Activated CD8-positive, alpha-beta memory T cell treated with anti-CD3 and anti-CD28 coated beads, Interleukin-2, amount 10 ng/mL, durations not matched to agents 7 days and 5 days (primary cell): ENCODE measurements at regions of chr12 and their contacts with region 1.

Region 1: DNA sequence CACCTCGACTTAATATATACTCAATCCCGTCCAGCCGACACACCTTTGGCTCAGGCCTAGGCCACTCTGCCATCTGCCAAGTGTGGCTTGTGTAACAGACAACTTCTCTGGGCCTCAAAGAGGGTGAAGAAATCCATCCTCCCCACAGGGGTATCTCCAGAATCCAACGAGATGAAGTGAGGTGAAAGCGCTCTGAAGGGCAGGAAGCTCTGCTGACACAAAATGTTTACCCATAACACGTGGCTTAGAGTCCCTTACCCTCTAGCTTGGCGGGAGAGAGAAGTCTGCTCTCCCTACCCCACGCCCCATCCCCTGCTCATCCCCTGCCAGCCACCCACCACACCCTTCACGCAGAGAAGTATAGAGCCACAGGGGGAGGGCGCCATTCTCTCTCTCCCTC is 13.0 kb downstream of the ZBTB39 start:
- DNase-seq: peak; percentile 38
- ATAC-seq: no peak
- H3K4me3 Mint-ChIP-seq: no peak overlapping the region
- H3K27ac Mint-ChIP-seq: no peak overlapping the region
- H3K4me1 Mint-ChIP-seq: peaks cover 20% of the 10 kb centered on the region
- H3K27me3 Mint-ChIP-seq: peaks cover 6% of the 10 kb centered on the region

Region 2: GRCh38 chr12:56759263-56759908 is 234.0 kb before region 1 on chr12:
- CTCF ChIA-PET with region 1: interaction called, 107 read pairs
- DNase-seq: no peak
- ATAC-seq: no peak
- H3K4me3 Mint-ChIP-seq: no peak overlapping the region
- H3K27ac Mint-ChIP-seq: no peak overlapping the region
- H3K4me1 Mint-ChIP-seq: peaks cover 11% of the 10 kb centered on the region
- H3K27me3 Mint-ChIP-seq: peaks cover 2% of the 10 kb centered on the region

Region 3: DNA sequence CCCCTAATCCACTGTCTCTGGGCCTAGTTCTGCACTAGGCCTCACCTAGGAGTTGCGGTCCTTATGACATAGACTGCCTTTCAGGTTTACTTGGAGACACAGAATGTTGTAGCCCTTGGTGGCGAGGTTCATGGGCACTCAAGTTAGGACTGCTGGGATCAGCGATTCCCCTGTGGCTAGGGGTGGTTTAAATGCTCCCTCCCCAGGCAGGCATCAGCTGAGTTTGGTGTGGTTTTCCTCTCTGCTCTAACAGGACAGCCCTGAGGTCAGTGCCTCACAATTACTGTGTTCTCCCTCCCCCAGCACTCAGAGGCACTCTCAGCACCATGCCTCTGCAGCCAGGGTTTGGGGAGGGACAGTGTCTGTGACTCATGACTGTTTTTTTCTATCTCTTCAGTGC is 13.7 kb before region 1 on chr12:
- CTCF ChIA-PET with region 1: no interaction called
- DNase-seq: no peak
- ATAC-seq: no peak
- H3K4me3 Mint-ChIP-seq: no peak overlapping the region
- H3K27ac Mint-ChIP-seq: no peak overlapping the region
- H3K4me1 Mint-ChIP-seq: no peaks in the 10 kb centered on the region
- H3K27me3 Mint-ChIP-seq: no peaks in the 10 kb centered on the region